Naive thymus-derived CD8-positive, alpha-beta T cell (primary cell): ENCODE measurements at regions of chr1 and their contacts with region 1.

Region 1: DNA sequence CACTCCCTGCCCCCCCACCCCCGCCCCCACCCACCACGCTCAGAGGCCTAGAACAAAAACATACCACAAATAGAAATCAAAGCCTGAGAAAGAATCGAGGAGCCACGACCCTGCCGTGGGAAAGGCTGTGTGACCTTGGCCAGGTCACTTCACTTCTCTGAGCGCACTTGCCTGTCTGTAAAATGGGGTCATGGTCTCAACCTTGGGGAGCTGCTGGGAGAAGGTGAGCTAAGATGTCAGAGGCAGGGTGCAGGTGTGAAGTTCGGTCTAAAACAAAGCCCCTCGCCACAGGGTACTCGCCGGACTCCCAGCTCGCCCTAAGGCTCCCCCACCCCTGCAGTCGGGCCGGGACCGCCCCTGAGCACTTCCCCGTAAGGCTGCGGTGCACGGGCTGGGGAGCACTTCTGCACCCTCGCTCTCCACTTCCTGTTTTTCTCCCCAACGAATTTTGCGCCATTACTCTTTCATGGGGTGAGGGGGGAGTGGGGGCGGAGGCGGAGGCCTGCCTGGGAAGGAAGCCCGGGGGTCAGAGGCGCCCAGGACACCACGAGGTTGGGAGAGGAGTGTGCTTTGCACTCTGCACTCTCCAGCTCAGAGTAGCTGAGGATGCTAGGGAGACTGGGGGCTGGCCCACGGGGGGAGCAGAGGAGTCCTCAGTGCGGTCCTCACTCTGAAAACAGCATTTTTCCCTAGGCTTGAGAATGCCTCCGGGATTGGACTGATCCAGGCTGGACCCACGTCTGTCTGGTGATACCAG is 21.9 kb upstream of the PIK3CD start:
- DNase-seq: peak; percentile 66 to 89 (median 80)
- ATAC-seq: peak; percentile 45 to 58
- H3K4me3 Mint-ChIP-seq: peak overlapping the region; percentile 90 to 100 (median 96)
- H3K27ac Mint-ChIP-seq: peak overlapping the region; percentile 91 to 100 (median 97)
- H3K4me1 Mint-ChIP-seq: peaks cover 25 to 78% (median 60%) of the 10 kb centered on the region in 4 donors
- H3K27me3 Mint-ChIP-seq: no peaks in the 10 kb centered on the region

Region 2: GRCh38 chr1:9338397-9339246 is 291.0 kb before region 1 on chr1:
- POLR2A ChIA-PET with region 1: no interaction called
- DNase-seq: no peak
- ATAC-seq: no peak
- H3K4me3 Mint-ChIP-seq: no peak overlapping the region
- H3K27ac Mint-ChIP-seq: no peak overlapping the region
- H3K4me1 Mint-ChIP-seq: peaks cover 0 to 3% (median 2%) of the 10 kb centered on the region in 4 donors
- H3K27me3 Mint-ChIP-seq: no peaks in the 10 kb centered on the region

Region 3: DNA sequence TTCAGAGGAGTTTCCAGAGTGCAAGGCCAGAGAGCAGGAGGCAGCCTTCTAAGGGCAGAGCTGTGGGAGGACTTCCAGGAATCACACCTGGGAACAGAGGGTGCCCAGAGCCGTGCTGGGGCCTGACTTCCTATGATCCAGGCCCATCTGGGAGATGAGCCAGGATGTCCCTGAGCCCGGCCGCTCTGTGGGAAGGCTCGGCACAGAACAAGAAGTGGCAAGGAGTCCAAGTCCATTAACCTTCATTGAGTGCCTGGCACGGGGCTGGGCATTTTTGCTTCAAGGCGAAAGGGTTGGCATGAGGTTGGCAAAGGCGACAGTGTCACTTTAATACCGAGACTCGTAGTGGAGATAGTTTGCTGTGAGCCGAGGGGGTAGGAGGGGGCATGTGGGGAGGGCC is 22.7 kb before region 1 on chr1:
- POLR2A ChIA-PET with region 1: no interaction called
- DNase-seq: no peak
- ATAC-seq: no peak
- H3K4me3 Mint-ChIP-seq: no peak overlapping the region
- H3K27ac Mint-ChIP-seq: no peak overlapping the region
- H3K4me1 Mint-ChIP-seq: no peaks in the 10 kb centered on the region
- H3K27me3 Mint-ChIP-seq: no peaks in the 10 kb centered on the region

Region 4: GRCh38 chr1:9689011-9689706 is 59.5 kb after region 1 on chr1:
- POLR2A ChIA-PET with region 1: interaction called, 224 read pairs
- DNase-seq: peak; percentile 70 to 96 (median 83)
- ATAC-seq: peak; percentile 67 to 77
- H3K4me3 Mint-ChIP-seq: peak overlapping the region; percentile 79 to 95 (median 86)
- H3K27ac Mint-ChIP-seq: peak overlapping the region; percentile 76 to 92 (median 88)
- H3K4me1 Mint-ChIP-seq: peaks cover 31 to 84% (median 79%) of the 10 kb centered on the region in 4 donors
- H3K27me3 Mint-ChIP-seq: no peaks in the 10 kb centered on the region

Region 5: GRCh38 chr1:9717193-9718005 is 87.8 kb after region 1 on chr1:
- POLR2A ChIA-PET with region 1: interaction called, 1,172 read pairs
- DNase-seq: peak; percentile 68 to 97 (median 90)
- ATAC-seq: peak; percentile 68 to 78
- H3K4me3 Mint-ChIP-seq: peak overlapping the region; percentile 85 to 98 (median 94)
- H3K27ac Mint-ChIP-seq: peak overlapping the region; percentile 82 to 100 (median 98)
- H3K4me1 Mint-ChIP-seq: peaks cover 24 to 77% (median 69%) of the 10 kb centered on the region in 4 donors
- H3K27me3 Mint-ChIP-seq: no peaks in the 10 kb centered on the region

Region 6: DNA sequence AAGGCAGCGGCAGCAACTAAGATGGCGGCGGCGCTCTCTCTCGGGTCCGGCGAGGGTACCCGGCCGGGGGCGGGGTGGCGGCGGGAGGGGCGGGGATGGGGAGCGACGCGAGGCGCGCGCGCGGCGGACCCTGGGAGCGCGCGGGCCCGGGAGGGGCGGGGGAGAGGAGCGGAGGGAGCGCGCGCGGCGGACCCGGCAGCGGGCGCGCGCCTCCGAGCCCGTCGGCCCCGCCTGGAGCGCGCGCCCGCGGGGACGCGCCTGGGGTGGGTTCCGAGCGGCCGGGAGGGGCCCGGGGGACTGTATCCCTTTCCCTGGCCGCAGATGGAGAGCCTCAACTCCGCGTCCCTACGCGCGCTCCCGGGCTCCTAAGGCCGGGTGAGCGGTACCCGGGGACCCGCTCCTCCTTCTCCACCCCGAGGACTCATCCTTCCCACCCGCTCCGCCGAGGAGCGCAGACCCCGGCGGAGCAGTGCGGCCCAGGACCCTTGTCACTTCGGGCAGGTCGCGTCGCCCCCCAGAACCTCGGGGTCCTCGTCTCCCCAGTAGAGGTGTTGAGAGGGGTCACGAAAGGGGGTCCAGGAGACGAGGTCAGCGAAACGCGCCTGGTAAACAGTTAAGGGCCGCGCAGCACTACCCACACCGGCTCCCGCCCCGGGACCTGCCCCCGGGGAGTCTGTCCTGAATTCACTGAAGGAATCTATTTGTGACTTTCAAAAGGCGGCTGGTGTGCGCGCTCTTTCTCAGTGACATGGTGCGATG is 194.5 kb after region 1 on chr1 and contains the start of gene CLSTN1:
- POLR2A ChIA-PET with region 1: interaction called, 10 read pairs
- DNase-seq: peak; percentile 74 to 94 (median 84)
- ATAC-seq: peak; percentile 75
- H3K4me3 Mint-ChIP-seq: peak within 1 kb of the TSS; percentile 85 to 97 (median 93)
- H3K27ac Mint-ChIP-seq: peak within 1 kb of the TSS; percentile 82 to 97 (median 93)
- H3K4me1 Mint-ChIP-seq: peaks cover 13 to 61% (median 48%) of the 10 kb centered on the region in 4 donors
- H3K27me3 Mint-ChIP-seq: no peaks in the 10 kb centered on the region
- polyA plus RNA-seq, gene CLSTN1: 10.7 to 32.3 (median 12.9) TPM